CD4-positive, alpha-beta T cell (primary cell): ENCODE measurements at regions of chr6 and their contacts with region 1.

Region 1: GRCh38 chr6:29953001-29953441 is 10.7 kb downstream of the HLA-A start:
- DNase-seq: no peak
- ATAC-seq: no peak
- H3K4me3 ChIP-seq: no peak overlapping the region
- H3K4me3 Mint-ChIP-seq: no peak overlapping the region
- H3K27ac ChIP-seq: no peak overlapping the region
- H3K27ac Mint-ChIP-seq: no peak overlapping the region
- H3K4me1 ChIP-seq: peaks cover 19% of the 10 kb centered on the region
- H3K4me1 Mint-ChIP-seq: peaks cover 44% of the 10 kb centered on the region
- H3K27me3 ChIP-seq: no peaks in the 10 kb centered on the region
- H3K27me3 Mint-ChIP-seq: no peaks in the 10 kb centered on the region
- CTCF ChIP-seq: no peak

Region 2: DNA sequence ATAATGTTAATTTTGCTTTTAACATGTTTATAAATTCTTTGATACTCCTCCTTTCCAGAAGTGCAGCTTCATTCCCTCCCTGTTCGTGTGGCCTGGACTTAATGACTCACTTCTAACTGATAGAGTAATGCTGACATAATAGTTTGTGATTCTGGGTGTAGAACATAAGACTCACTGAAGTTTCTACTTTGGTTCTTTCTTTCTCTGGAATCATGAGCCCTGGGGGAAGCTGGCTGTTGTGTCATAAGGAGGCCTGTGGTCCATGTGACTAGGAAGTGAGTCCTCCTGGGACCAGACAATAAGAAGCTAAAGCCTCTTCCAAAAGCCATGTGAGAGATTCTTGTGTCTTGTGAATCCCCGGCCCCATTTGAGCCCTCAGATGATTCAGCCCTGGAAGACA is 155.9 kb before region 1 on chr6:
- CTCF ChIA-PET with region 1: no interaction called
- POLR2A ChIA-PET with region 1: interaction called, 21 read pairs
- intact Hi-C with region 1: loop called in 1 of 2 experiments (anchors 1 kb)
- DNase-seq: no peak
- ATAC-seq: no peak
- H3K4me3 ChIP-seq: no peak overlapping the region
- H3K4me3 Mint-ChIP-seq: no peak overlapping the region
- H3K27ac ChIP-seq: no peak overlapping the region
- H3K27ac Mint-ChIP-seq: no peak overlapping the region
- H3K4me1 ChIP-seq: peaks cover 15% of the 10 kb centered on the region
- H3K4me1 Mint-ChIP-seq: peaks cover 15% of the 10 kb centered on the region
- H3K27me3 ChIP-seq: peaks cover 9 to 15% of the 10 kb centered on the region in 2 experiments
- H3K27me3 Mint-ChIP-seq: peaks cover 49% of the 10 kb centered on the region
- CTCF ChIP-seq: no peak

Region 3: DNA sequence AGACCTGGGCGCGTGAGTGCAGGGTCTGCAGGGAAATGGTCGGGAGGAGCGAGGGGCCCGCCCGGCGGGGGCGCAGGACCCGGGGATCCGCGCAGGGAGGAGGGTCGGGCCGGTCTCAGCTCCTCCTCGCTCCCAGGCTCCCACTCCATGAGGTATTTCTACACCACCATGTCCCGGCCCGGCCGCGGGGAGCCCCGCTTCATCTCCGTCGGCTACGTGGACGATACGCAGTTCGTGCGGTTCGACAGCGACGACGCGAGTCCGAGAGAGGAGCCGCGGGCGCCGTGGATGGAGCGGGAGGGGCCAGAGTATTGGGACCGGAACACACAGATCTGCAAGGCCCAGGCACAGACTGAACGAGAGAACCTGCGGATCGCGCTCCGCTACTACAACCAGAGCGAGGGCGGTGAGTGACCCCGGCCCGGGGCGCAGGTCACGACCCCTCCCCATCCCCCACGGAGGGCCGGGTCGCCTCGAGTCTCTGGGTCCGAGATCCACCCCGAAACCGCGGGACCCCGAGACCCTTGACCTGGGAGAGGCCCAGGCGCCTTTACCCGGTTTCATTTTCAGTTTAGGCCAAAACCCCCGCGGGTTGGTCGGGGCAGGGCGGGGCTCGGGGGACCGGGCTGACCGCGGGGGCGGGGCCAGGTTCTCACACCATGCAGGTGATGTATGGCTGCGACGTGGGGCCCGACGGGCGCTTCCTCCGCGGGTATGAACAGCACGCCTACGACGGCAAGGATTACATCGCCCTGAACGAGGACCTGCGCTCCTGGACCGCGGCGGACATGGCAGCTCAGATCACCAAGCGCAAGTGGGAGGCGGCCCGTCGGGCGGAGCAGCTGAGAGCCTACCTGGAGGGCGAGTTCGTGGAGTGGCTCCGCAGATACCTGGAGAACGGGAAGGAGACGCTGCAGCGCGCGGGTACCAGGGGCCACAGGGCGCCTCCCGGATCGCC is 64.9 kb before region 1 on chr6:
- CTCF ChIA-PET with region 1: no interaction called
- POLR2A ChIA-PET with region 1: interaction called, 18 read pairs
- intact Hi-C with region 1: loop called (anchors 1 kb)
- DNase-seq: peak; percentile 66 to 95 (median 84)
- ATAC-seq: peak; percentile 80
- H3K4me3 ChIP-seq: peak overlapping the region; percentile 86
- H3K4me3 Mint-ChIP-seq: peak overlapping the region; percentile 93
- H3K27ac ChIP-seq: peak overlapping the region; percentile 73 to 89
- H3K27ac Mint-ChIP-seq: peak overlapping the region; percentile 97
- H3K4me1 ChIP-seq: peaks cover 22% of the 10 kb centered on the region
- H3K4me1 Mint-ChIP-seq: peaks cover 43% of the 10 kb centered on the region
- H3K27me3 ChIP-seq: no peaks in the 10 kb centered on the region
- H3K27me3 Mint-ChIP-seq: no peaks in the 10 kb centered on the region
- CTCF ChIP-seq: no peak

Region 4: DNA sequence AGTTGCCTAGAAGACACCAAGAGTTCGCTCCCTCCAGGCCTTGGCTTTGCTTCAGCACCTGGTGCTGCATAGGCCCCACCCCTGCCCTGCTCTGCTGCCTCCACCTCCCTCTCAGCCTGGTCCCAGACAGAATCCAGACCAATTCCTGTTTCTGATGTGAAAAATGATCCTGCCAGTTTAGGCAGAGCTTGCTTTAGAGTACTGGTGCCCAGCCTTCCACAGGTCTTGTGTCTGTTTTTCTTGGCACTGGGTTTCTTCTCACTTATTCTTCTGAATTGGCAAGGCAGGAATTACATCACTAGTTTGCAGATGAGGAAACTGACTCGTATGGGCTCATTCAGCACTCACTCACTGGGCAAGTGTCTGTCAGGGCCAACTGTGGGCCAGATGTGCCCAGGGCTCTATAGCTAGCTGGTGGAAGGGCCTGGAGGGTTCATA is 42.3 kb after region 1 on chr6:
- CTCF ChIA-PET with region 1: no interaction called
- POLR2A ChIA-PET with region 1: no interaction called
- intact Hi-C with region 1: no loop called
- DNase-seq: no peak
- ATAC-seq: no peak
- H3K4me3 ChIP-seq: no peak overlapping the region
- H3K4me3 Mint-ChIP-seq: no peak overlapping the region
- H3K27ac ChIP-seq: no peak overlapping the region
- H3K27ac Mint-ChIP-seq: no peak overlapping the region
- H3K4me1 ChIP-seq: no peaks in the 10 kb centered on the region
- H3K4me1 Mint-ChIP-seq: no peaks in the 10 kb centered on the region
- H3K27me3 ChIP-seq: no peaks in the 10 kb centered on the region
- H3K27me3 Mint-ChIP-seq: no peaks in the 10 kb centered on the region
- CTCF ChIP-seq: no peak